Activated T-helper 1 cell treated with anti-CD3 and anti-CD28 coated beads, Interleukin-12 subunit alpha, Interleukin-12 subunit beta, Interleukin-2, Interleukin-4 antibody, amounts not matched to agents 30 ng/mL and 10 ng/mL and 1 ng/mL, durations not matched to agents 14 hours and 24 hours and 36 hours (primary cell): ENCODE measurements at regions of chr3 and their contacts with region 1.

Region 1: DNA sequence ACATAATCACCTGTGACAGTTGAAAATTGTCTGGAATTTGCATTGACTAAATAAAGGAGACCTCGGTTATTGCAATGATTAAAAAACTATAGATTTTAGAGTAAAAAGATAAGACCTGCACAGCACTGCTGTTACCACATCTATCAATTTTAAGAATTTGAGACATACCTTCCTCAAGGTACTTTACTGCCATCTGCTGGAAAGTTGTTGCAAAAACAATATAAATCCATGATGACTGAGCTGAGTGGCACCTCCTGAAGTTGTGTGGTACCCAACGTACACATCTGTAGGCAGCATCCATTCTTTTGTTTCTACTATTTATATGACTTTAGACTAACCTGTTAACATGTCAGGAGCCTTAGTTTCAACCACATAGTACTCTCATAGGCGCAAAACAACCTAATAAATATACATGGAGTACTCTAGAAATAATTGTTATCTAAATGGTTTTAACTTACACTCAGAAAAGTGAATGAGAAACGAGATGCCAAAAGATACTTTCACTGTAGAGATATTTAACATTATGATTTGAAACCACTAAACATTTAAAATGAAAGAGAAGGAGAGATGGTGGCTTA is 106.7 kb downstream of the GHSR start:
- DNase-seq: peak; percentile 13
- H3K4me3 Mint-ChIP-seq: no peak overlapping the region
- H3K27ac Mint-ChIP-seq: no peak overlapping the region
- H3K4me1 Mint-ChIP-seq: no peaks in the 10 kb centered on the region
- H3K27me3 Mint-ChIP-seq: no peaks in the 10 kb centered on the region

Region 2: DNA sequence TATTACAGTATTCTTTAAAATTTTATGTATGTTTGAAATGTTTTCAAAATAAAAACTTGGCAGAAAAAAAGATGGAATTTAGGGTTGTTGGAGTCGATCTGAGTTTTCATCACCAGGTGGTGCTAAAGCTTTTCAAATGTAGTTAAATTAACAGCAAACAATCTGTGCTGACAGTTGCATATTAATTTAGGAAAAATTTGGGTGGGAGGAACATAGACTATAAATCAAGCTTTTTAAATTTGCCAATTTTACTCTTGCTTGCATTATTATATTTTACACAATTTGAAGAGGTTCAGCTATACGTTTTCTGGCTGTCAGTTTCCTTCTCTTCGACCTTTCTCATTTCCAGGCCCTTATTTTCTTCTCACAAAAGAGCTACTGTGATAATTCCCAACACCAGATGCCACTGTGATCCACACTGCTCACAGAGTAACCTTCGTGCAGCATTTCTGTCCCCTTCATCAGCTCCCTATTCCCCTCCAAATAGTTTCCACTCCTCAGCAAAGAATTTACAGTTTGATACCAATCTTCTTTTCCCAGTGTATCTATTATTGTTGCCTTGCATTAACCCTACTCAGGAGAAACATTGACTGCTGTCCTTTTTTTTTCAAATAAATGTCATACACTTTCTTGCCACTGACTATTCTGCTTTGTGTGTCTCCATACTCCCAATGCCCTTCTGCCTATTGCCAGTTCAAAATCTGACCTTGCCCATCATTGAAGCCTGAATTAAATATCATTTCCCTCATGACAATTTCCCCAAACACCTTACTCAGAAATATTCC is 1379.8 kb before region 1 on chr3:
- intact Hi-C with region 1: loop called (anchors 10 kb)
- DNase-seq: no peak
- H3K4me3 Mint-ChIP-seq: no peak overlapping the region
- H3K27ac Mint-ChIP-seq: no peak overlapping the region
- H3K4me1 Mint-ChIP-seq: no peaks in the 10 kb centered on the region
- H3K27me3 Mint-ChIP-seq: peaks cover 13% of the 10 kb centered on the region

Region 3: DNA sequence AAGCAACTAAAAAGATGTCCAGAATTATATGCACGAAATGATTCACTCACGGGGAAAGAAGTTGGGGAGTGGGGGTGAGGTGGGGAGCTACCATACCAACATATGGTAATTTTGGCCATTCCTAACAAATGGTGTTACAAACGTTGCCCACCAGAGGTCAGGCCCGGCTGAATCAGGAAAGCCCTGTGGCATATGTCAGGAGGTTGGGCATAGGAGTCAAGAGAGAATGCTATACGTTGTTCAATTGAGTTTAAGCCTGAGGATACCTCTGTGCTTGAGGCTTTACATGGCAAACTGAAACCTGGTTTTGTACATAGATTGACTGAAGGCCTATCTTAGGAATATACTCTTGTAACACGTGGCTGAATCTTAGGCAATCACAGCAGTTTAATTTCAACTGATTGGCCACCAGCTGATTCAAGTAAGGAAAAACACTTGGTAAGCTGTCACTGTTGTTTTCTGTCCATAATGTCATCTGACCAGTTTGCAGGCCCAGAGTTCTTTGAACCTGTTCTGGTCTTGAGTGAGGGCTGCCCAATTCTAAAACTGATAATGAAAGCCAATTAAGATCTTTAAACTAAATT is 1291.6 kb before region 1 on chr3:
- intact Hi-C with region 1: loop called (anchors 5 kb)
- DNase-seq: peak; percentile 9
- H3K4me3 Mint-ChIP-seq: no peak overlapping the region
- H3K27ac Mint-ChIP-seq: no peak overlapping the region
- H3K4me1 Mint-ChIP-seq: no peaks in the 10 kb centered on the region
- H3K27me3 Mint-ChIP-seq: peaks cover 10% of the 10 kb centered on the region

Region 4: GRCh38 chr3:171646357-171647133 is 695.0 kb before region 1 on chr3:
- intact Hi-C with region 1: loop called (anchors 1 kb)
- DNase-seq: no peak
- H3K4me3 Mint-ChIP-seq: no peak overlapping the region
- H3K27ac Mint-ChIP-seq: no peak overlapping the region
- H3K4me1 Mint-ChIP-seq: no peaks in the 10 kb centered on the region
- H3K27me3 Mint-ChIP-seq: peaks cover 2% of the 10 kb centered on the region

Region 5: GRCh38 chr3:171703756-171704401 is 637.7 kb before region 1 on chr3:
- intact Hi-C with region 1: loop called (anchors 1 kb)
- DNase-seq: no peak
- H3K4me3 Mint-ChIP-seq: no peak overlapping the region
- H3K27ac Mint-ChIP-seq: no peak overlapping the region
- H3K4me1 Mint-ChIP-seq: no peaks in the 10 kb centered on the region
- H3K27me3 Mint-ChIP-seq: peaks cover 14% of the 10 kb centered on the region

Region 6: GRCh38 chr3:171809821-171810628 is 531.5 kb before region 1 on chr3 and contains the start of gene PLD1:
- intact Hi-C with region 1: loop called (anchors 5 kb)
- DNase-seq: peak; percentile 27
- H3K4me3 Mint-ChIP-seq: peak within 1 kb of the TSS; percentile 83
- H3K27ac Mint-ChIP-seq: no peak within 1 kb of the TSS
- H3K4me1 Mint-ChIP-seq: peaks cover 22% of the 10 kb centered on the region
- H3K27me3 Mint-ChIP-seq: peaks cover 53% of the 10 kb centered on the region
- total RNA-seq, gene PLD1: 0.15 and 0.29 TPM in 2 replicates

Region 7: GRCh38 chr3:171829841-171830517 is 511.6 kb before region 1 on chr3:
- intact Hi-C with region 1: loop called (anchors 5 kb)
- DNase-seq: no peak
- H3K4me3 Mint-ChIP-seq: no peak overlapping the region
- H3K27ac Mint-ChIP-seq: no peak overlapping the region
- H3K4me1 Mint-ChIP-seq: peaks cover 5% of the 10 kb centered on the region
- H3K27me3 Mint-ChIP-seq: peaks cover 20% of the 10 kb centered on the region

Region 8: GRCh38 chr3:172317984-172318383 is 23.6 kb before region 1 on chr3:
- intact Hi-C with region 1: no loop called
- DNase-seq: no peak
- H3K4me3 Mint-ChIP-seq: no peak overlapping the region
- H3K27ac Mint-ChIP-seq: peak overlapping the region; percentile 67
- H3K4me1 Mint-ChIP-seq: peaks cover 20% of the 10 kb centered on the region
- H3K27me3 Mint-ChIP-seq: no peaks in the 10 kb centered on the region

Region 9: DNA sequence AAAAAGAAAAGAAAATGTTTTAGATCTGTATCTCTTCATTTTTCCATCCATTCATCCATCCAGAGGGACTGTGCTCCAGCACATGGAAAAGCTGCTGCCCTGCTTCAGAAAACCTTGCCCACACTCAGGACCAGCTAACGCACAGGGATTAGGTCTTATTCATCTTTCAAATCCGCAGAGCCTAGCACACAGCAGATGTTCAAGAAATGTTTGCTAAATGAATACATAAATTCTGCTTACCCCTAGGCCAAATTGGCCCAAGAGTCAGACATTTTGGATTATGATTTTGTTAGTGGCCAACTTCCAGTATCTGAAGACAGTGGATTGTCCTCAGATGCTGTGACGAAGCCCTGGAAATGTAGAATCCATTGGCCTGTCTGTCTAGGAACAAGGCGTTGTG is 35.3 kb after region 1 on chr3:
- intact Hi-C with region 1: no loop called
- DNase-seq: no peak
- H3K4me3 Mint-ChIP-seq: no peak overlapping the region
- H3K27ac Mint-ChIP-seq: no peak overlapping the region
- H3K4me1 Mint-ChIP-seq: no peaks in the 10 kb centered on the region
- H3K27me3 Mint-ChIP-seq: no peaks in the 10 kb centered on the region